ENCODE measurements at regions of chr7 and their contacts with region 1.

Region 1: DNA sequence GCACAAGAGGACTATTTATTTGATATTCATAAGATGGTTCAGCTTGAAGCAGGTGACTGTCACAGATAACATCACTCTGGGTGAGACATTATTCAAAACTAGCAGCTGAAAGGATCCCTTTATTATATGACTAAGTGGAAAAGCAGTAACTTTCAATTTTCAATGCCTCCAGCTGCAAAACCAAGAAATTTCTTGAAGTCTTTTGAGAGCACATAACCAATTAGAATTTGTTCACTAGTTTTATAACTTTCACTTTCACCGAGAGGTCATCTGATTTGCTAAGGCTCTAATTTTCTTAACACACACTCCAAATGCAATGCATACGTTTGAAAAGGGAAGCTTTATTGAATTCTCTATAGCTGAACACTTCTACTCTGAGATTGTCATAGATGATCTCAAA is 88.6 kb upstream of the KLF14 start:
- DNase-seq: no peak
- H3K4me3 ChIP-seq: no peak overlapping the region
- H3K27ac ChIP-seq: no peak overlapping the region
- H3K4me1 ChIP-seq: no peaks in the 10 kb centered on the region
- H3K27me3 ChIP-seq: no peaks in the 10 kb centered on the region
- CTCF ChIP-seq: no peak

Region 2: GRCh38 chr7:130695840-130696239 is 126.8 kb before region 1 on chr7:
- CTCF ChIA-PET with region 1: no interaction called
- POLR2A ChIA-PET with region 1: interaction called, 10 read pairs
- intact Hi-C with region 1: no loop called
- DNase-seq: peak in 1 of 2 experiments; percentile 6
- H3K4me3 ChIP-seq: no peak overlapping the region
- H3K27ac ChIP-seq: no peak overlapping the region
- H3K4me1 ChIP-seq: no peaks in the 10 kb centered on the region
- H3K27me3 ChIP-seq: no peaks in the 10 kb centered on the region
- CTCF ChIP-seq: peak; percentile 75

Region 3: GRCh38 chr7:130732980-130733930 is 89.4 kb before region 1 on chr7:
- CTCF ChIA-PET with region 1: no interaction called
- POLR2A ChIA-PET with region 1: no interaction called
- intact Hi-C with region 1: no loop called
- DNase-seq: peak in 1 of 2 experiments; percentile 10
- H3K4me3 ChIP-seq: peak overlapping the region; percentile 48; the same call in 1 of the 2 replicates
- H3K27ac ChIP-seq: no peak overlapping the region
- H3K4me1 ChIP-seq: peaks cover 6% of the 10 kb centered on the region; the same call in 1 of the 2 replicates
- H3K27me3 ChIP-seq: no peaks in the 10 kb centered on the region
- CTCF ChIP-seq: no peak

Measured in PC-9 (cell line).